ENCODE measurements at regions of chr7 and their contacts with region 1.

Region 1: DNA sequence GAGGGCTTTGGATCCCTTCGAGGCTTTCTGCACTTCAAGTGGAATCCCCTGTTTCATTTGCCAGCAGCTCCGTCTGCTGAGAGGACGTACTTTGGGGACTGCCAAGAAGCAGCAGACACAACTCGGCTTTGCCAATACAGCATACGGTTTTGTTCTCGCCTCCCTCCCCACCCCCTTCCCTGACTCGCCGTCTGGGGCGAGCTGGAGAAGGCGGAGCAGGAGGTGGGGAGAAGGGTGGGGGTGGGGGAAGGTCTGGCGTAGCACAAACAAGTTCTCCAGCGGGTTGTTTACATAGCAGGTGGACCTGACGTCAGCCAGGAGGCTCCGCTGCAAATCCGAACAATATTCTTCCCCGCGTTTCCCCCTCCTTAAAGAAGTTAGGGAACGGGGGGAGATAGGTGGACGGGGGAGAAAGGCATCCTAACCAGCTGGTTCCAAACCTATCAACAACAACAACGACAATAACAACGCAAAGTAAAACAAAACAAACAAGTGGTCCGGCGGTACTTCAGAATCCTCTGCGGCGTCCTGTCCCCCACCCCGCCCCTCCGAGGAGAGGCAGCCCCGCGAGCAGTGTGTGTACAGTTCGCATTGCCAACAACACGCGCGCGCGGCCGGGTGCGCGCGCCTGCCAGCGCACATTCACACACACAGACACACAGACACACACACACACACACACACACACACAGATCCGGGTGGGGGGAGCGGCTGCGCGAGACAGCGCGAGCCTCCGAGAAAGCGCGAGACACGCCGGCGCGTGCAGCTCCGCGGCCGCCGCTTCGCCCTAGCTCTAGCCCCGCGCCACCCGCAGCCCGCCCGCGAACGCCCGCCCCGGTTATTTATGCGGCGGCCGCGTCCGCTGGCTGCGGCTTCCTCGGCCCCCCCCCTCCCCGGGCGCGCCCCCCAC is 167.0 kb upstream of the PPP1R3A start:
- DNase-seq: peak; percentile 67 to 69
- ATAC-seq: peak; percentile 84 to 94 (median 88)
- H3K4me3 ChIP-seq: peak overlapping the region; percentile 49 to 65 (median 59)
- H3K27ac ChIP-seq: peak overlapping the region; percentile 58 to 89 (median 82)
- H3K4me1 ChIP-seq: peaks cover 0 to 49% (median 26%) of the 10 kb centered on the region in 9 donors
- H3K27me3 ChIP-seq: peaks cover 9 to 99% (median 93%) of the 10 kb centered on the region in 7 donors
- CTCF ChIP-seq: no peak

Region 2: GRCh38 chr7:114033475-114033874 is 52.4 kb before region 1 on chr7:
- intact Hi-C with region 1: no loop called
- DNase-seq: no peak
- ATAC-seq: no peak
- H3K4me3 ChIP-seq: no peak overlapping the region
- H3K27ac ChIP-seq: no peak overlapping the region
- H3K4me1 ChIP-seq: no peaks in the 10 kb centered on the region
- H3K27me3 ChIP-seq: no peaks in the 10 kb centered on the region
- CTCF ChIP-seq: no peak

Region 3: DNA sequence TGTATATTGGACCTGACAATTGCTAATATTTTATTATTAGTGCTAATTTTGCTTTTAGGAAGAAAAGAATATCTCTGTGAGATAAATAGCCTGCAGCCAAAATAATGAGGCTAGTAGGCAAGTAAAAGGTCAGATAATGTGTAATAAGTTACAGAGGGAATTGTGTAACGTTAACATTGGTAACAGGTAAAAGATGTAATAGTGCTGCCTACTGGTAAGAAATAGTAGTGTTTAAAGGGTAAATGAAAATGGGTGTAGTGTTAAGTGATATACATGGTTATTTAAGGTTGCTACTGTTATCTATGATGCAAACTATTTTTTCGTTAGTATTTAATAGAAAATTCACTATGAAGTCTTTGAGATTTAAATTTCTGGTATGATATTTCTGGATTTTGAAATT is 319.6 kb after region 1 on chr7:
- intact Hi-C with region 1: loop called in 3 of 10 experiments (anchors 5 to 10 kb)
- DNase-seq: no peak
- ATAC-seq: peak in 1 of 8 donors; percentile 66
- H3K4me3 ChIP-seq: no peak overlapping the region
- H3K27ac ChIP-seq: no peak overlapping the region
- H3K4me1 ChIP-seq: no peaks in the 10 kb centered on the region
- H3K27me3 ChIP-seq: no peaks in the 10 kb centered on the region
- CTCF ChIP-seq: peak in 6 of 9 donors; percentile 12 to 41 (median 34)

Region 4: DNA sequence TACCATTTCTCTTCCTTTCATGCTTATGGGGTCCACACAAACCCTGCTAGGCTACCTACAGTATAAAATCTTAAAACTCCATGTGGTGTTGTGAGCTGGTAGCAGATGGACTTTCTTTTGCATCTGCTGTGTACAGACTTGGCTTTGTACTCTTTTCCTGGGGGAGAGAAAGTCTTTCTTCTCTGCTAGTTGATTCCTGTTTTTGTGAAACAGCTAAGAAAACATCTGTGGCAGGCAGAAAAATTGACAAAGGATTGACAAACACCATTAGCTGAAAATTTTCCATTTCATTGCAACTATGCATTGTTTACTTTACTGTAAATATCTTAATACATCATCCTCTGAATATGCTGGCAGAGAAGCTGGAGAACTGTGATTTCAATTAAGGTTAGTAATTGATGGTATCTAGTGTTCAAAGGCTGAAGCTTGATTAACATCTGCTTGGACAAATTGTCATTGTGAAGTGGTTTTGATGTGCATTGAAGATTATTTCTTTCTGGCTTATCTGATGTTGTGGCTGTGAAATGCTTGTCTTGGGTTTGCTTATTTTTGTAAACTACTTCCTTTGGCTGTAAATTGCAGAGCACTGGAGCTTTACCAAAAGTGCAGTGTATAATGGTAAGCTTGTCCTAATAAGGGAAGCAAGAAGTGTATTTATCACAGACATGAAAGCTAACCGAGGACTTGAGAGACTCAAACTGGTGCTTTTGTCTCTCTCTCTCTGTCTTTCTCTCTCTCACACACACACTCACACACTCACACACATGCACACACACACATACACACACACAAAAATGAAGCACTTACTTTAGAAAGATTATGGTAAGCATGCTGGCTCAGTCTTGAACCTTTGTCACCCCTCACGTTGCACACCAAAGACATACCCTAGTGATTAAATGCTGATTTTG is 328.6 kb after region 1 on chr7 and contains the start of gene FOXP2:
- intact Hi-C with region 1: loop called in 3 of 10 experiments (anchors 5 to 10 kb)
- DNase-seq: no peak
- ATAC-seq: peak in 4 of 8 donors; percentile 25 to 44 (median 30)
- H3K4me3 ChIP-seq: peak within 1 kb of the TSS in 7 of 10 donors; percentile 21 to 43 (median 37)
- H3K27ac ChIP-seq: peak within 1 kb of the TSS in 4 of 10 donors; percentile 26 to 46 (median 36)
- H3K4me1 ChIP-seq: peaks cover 0 to 5% (median 0%) of the 10 kb centered on the region in 9 donors
- H3K27me3 ChIP-seq: no peaks in the 10 kb centered on the region
- CTCF ChIP-seq: no peak
- total RNA-seq, gene FOXP2: 1.3 to 4.7 (median 2.3) TPM

Region 5: DNA sequence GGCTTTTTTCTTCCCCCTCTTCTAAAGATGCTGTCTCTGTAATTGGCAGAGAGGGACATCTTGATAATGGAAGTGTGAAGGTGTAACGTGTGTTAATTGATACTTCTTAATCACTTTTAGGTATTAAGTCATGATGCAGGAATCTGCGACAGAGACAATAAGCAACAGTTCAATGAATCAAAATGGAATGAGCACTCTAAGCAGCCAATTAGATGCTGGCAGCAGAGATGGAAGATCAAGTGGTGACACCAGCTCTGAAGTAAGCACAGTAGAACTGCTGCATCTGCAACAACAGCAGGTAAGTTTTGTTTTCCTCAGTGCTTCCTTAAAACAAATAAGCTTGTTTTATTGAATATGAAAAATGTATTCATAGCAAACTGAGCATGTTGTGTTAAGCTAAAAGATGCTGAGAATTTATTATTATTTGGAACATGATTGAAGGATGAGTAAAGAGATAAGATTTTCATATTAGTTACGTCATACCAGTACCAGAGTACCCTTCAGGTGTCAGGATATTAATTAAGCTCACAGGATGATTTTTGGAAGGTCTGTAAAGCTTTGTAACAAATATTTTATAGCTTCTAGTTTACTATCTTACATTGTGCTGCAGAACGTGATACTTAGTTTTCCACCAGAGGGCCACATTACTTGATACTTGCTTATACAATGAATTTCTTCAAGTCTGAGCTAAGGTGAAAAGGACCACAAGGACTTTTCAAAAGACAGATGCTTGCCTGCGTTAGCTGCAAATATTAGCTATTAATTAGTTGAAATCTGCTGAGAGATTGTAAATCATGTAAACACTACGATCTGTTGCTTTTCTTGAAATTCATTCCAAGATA is 340.8 kb after region 1 on chr7:
- intact Hi-C with region 1: loop called in 1 of 10 experiments (anchors 10 kb)
- DNase-seq: no peak
- ATAC-seq: no peak
- H3K4me3 ChIP-seq: no peak overlapping the region
- H3K27ac ChIP-seq: no peak overlapping the region
- H3K4me1 ChIP-seq: no peaks in the 10 kb centered on the region
- H3K27me3 ChIP-seq: no peaks in the 10 kb centered on the region
- CTCF ChIP-seq: peak in 6 of 9 donors; percentile 9 to 46 (median 36)

Region 6: DNA sequence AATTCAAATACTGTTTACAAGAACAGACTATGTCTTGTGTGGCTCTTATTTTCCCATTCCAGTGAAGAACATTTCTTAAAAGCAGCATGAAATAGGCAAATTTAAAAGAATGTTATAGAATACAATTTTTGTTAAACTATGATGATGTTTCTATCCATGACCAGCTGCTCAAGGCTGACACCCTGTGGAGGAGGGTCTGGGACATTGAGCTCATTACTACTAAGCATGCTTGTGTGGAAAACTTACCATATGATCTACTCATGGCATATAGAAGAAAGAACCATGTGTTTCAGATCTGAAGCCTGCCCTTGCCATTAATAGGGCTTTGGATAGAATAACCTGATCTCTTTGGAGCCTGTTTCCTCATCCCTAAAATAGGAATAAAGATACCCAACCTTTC is 453.7 kb after region 1 on chr7:
- intact Hi-C with region 1: loop called in 1 of 10 experiments (anchors 10 kb)
- DNase-seq: peak in 1 of 2 donors; percentile 4
- ATAC-seq: no peak
- H3K4me3 ChIP-seq: no peak overlapping the region
- H3K27ac ChIP-seq: no peak overlapping the region
- H3K4me1 ChIP-seq: no peaks in the 10 kb centered on the region
- H3K27me3 ChIP-seq: no peaks in the 10 kb centered on the region
- CTCF ChIP-seq: peak in 6 of 9 donors; percentile 31 to 47 (median 37)

Region 7: DNA sequence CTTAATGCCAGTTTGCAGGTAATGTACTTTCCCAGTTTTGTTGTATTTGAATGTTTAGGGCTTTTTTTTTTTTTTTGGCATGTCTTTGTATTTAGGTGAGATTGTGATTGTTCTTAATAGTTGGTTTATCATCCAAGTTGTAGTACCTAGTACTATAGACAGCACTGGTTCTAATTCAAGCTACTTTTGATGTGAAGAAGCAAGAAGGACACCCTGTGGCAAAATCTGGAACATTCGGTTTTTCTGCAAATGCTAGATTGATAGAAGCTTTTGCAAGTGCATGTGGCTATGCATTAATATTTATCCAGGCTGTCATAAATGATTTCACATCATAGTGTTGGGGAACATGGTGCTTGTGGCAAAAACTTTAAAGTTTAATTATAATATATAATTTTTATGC is 577.7 kb after region 1 on chr7:
- intact Hi-C with region 1: loop called in 1 of 10 experiments (anchors 5 kb)
- DNase-seq: no peak
- ATAC-seq: no peak
- H3K4me3 ChIP-seq: no peak overlapping the region
- H3K27ac ChIP-seq: no peak overlapping the region
- H3K4me1 ChIP-seq: peaks cover 0 to 10% (median 0%) of the 10 kb centered on the region in 9 donors
- H3K27me3 ChIP-seq: no peaks in the 10 kb centered on the region
- CTCF ChIP-seq: peak in 4 of 9 donors; percentile 20 to 35 (median 26)

Region 8: GRCh38 chr7:115910541-115911164 is 1824.8 kb after region 1 on chr7:
- intact Hi-C with region 1: loop called in 1 of 10 experiments (anchors 5 kb)
- DNase-seq: no peak
- ATAC-seq: no peak
- H3K4me3 ChIP-seq: no peak overlapping the region
- H3K27ac ChIP-seq: no peak overlapping the region
- H3K4me1 ChIP-seq: peaks cover 0 to 9% (median 0%) of the 10 kb centered on the region in 9 donors
- H3K27me3 ChIP-seq: peaks cover 0 to 13% (median 0%) of the 10 kb centered on the region in 7 donors
- CTCF ChIP-seq: peak in 8 of 9 donors; percentile 15 to 68 (median 62)

Measured in heart right ventricle (tissue), 16 donors.